HepG2 (cell line): ENCODE measurements at regions of chr2 and their contacts with region 1.

Region 1: DNA sequence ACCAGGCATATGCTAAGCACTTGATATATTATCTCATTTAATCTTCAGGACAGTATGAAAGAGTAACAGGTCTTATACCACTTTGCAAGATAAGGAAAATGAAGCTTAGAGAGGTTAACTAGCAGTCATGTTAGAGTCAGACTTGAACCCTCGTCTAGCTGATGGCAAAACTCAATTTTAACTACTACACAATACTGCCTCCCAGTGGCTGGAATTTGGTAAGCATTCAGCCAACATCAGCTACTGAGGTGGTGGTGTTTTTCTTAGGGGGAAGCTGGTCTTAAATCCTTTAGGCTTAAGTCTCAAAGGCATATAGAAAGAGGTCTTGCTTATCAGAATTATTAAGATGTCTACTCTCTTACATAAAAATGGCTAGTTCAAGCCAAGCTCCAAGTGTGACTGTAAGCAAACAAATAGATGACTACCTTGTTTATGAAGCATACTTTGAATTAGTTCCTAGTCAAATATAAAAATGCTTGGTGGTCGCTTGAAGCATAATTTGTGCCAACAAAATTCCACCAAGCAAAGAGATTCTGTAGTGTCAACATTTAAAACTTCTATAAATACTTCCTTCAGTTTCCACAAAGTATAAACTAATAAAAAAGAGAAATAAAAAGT is 325.4 kb upstream of the FIGN start:
- DNase-seq: peak; percentile 53
- ATAC-seq: peak; percentile 78
- H3K4me3 ChIP-seq: no peak overlapping the region
- H3K27ac ChIP-seq: no peak overlapping the region
- H3K4me1 ChIP-seq: no peaks in the 10 kb centered on the region
- H3K27me3 ChIP-seq: no peaks in the 10 kb centered on the region
- CTCF ChIP-seq: peak; percentile 82
- EP300 ChIP-seq: no peak
- POLR2A ChIP-seq: no peak
- RAD21 ChIP-seq: peak; percentile 74

Region 2: GRCh38 chr2:163471947-163472346 is 589.3 kb before region 1 on chr2:
- CTCF ChIA-PET with region 1: interaction called, 4 read pairs
- POLR2A ChIA-PET with region 1: no interaction called
- in situ Hi-C with region 1: no loop called
- intact Hi-C with region 1: loop called (anchors 1 kb)
- DNase-seq: peak; percentile 3
- ATAC-seq: peak; percentile 50
- H3K4me3 ChIP-seq: no peak overlapping the region
- H3K27ac ChIP-seq: no peak overlapping the region
- H3K4me1 ChIP-seq: peaks cover 16% of the 10 kb centered on the region; the same call in 1 of the 2 replicates
- H3K27me3 ChIP-seq: no peaks in the 10 kb centered on the region
- CTCF ChIP-seq: peak; percentile 59
- EP300 ChIP-seq: no peak
- POLR2A ChIP-seq: no peak
- RAD21 ChIP-seq: 0 out of 2 replicates have a peak, but pooled peaks have one; percentile 11

Region 3: DNA sequence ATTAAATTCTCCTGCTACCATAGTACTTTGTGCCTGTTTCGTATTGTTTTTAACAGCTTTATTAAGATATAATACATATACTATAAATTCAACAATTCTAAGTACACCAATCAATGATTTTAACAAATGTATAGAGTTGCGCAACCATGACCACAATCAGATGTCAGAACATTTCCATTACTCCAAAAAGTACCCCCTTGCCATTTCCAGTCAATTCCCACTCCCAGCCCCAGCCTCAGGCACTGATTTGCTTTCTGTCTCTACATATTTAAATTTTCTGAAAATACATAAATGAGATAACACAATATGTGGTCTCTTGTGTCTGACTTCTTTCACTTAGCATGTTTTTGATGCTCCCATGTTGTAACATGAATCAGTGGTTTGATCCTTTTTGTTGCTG is 519.3 kb before region 1 on chr2:
- CTCF ChIA-PET with region 1: no interaction called
- POLR2A ChIA-PET with region 1: no interaction called
- in situ Hi-C with region 1: no loop called
- intact Hi-C with region 1: no loop called
- DNase-seq: no peak
- ATAC-seq: no peak
- H3K4me3 ChIP-seq: no peak overlapping the region
- H3K27ac ChIP-seq: no peak overlapping the region
- H3K4me1 ChIP-seq: no peaks in the 10 kb centered on the region
- H3K27me3 ChIP-seq: no peaks in the 10 kb centered on the region
- CTCF ChIP-seq: no peak
- EP300 ChIP-seq: no peak
- POLR2A ChIP-seq: no peak
- RAD21 ChIP-seq: no peak

Region 4: GRCh38 chr2:163878531-163879117 is 182.6 kb before region 1 on chr2:
- CTCF ChIA-PET with region 1: no interaction called
- POLR2A ChIA-PET with region 1: no interaction called
- in situ Hi-C with region 1: no loop called
- intact Hi-C with region 1: loop called (anchors 5 kb)
- DNase-seq: peak; percentile 59
- ATAC-seq: peak; percentile 94
- H3K4me3 ChIP-seq: no peak overlapping the region
- H3K27ac ChIP-seq: no peak overlapping the region
- H3K4me1 ChIP-seq: no peaks in the 10 kb centered on the region
- H3K27me3 ChIP-seq: no peaks in the 10 kb centered on the region
- CTCF ChIP-seq: peak; percentile 77
- EP300 ChIP-seq: no peak
- POLR2A ChIP-seq: no peak
- RAD21 ChIP-seq: peak; percentile 58